Endothelial cell of umbilical vein (primary cell): ENCODE measurements at regions of chr20 and their contacts with region 1.

Region 1: GRCh38 chr20:7459083-7459482 is 481.2 kb downstream of the HAO1 start:
- DNase-seq: peak; percentile 80
- H3K4me3 ChIP-seq: peak overlapping the region in 1 of 3 experiments; percentile 41
- H3K27ac ChIP-seq: peak overlapping the region; percentile 0
- H3K4me1 ChIP-seq: peaks cover 9% of the 10 kb centered on the region
- H3K27me3 ChIP-seq: no peaks in the 10 kb centered on the region
- CTCF ChIP-seq: no peak
- POLR2A ChIP-seq: no peak

Region 2: GRCh38 chr20:7161690-7162089 is 297.4 kb before region 1 on chr20:
- CTCF ChIA-PET with region 1: no interaction called
- POLR2A ChIA-PET with region 1: no interaction called
- dilution Hi-C with region 1: no loop called
- intact Hi-C with region 1: no loop called
- DNase-seq: peak; percentile 36
- H3K4me3 ChIP-seq: no peak overlapping the region
- H3K27ac ChIP-seq: no peak overlapping the region
- H3K4me1 ChIP-seq: peaks cover 16% of the 10 kb centered on the region
- H3K27me3 ChIP-seq: no peaks in the 10 kb centered on the region
- CTCF ChIP-seq: peak in 1 of 2 donors; percentile 35
- POLR2A ChIP-seq: no peak

Region 3: DNA sequence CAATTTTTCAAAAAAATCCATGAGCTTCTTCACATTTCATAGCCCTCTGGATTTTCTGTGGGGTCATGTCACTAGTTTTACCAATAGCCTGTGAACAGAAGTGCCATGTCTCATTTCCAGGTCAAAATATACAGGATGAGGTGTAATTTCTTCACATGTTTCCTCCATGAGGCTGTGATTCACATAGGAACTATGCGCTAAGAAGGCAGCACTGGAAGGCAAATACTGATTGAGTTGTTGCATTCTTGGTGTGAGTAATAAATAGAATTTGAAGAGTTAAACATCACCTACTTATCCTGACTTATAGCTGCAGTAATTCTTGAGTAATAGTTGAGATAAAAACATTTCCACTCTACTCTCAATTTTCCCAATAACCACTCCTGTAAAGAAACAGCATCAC is 38.9 kb after region 1 on chr20:
- CTCF ChIA-PET with region 1: no interaction called
- POLR2A ChIA-PET with region 1: no interaction called
- dilution Hi-C with region 1: no loop called
- intact Hi-C with region 1: loop called (anchors 2 kb)
- DNase-seq: peak; percentile 94
- H3K4me3 ChIP-seq: no peak overlapping the region
- H3K27ac ChIP-seq: peak overlapping the region; percentile 69
- H3K4me1 ChIP-seq: peaks cover 25% of the 10 kb centered on the region
- H3K27me3 ChIP-seq: no peaks in the 10 kb centered on the region
- CTCF ChIP-seq: no peak
- POLR2A ChIP-seq: peak; percentile 26